Testis (tissue), 5 donors: ENCODE measurements at regions of chr2 and their contacts with region 1.

Region 1: DNA sequence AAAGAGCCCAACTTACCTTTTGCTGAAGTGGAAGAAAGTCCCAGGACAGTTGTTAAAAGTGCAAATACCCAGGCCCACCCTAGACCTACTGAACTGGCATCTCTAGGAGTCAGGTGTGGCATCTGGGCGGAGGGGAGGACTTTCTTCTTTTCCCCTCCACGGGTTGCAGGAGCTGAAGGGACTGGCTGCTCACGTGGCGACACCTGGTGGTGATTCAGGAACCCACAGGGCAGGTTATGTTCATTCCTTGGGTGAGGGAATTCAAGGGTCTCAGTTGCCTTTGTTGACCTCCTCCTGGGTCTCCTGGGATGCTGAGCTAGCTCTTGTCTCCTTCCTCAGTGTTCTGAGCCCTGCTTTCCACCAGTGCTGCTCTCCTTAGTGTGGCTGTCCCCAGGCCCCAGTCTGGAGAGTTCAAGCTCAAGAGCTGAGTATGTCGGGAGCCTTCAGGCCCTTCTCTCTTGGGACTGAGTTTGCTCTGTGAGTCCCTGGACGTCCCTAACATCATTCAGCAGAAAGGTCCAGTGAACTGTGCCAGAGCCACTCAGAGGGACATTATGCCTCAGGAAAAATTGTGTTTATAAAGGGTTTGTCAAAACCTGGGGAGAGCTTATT is 56.9 kb downstream of the DYSF start:
- DNase-seq: peak; percentile 82
- H3K4me3 ChIP-seq: no peak overlapping the region
- H3K27ac ChIP-seq: no peak overlapping the region
- H3K4me1 ChIP-seq: no peaks in the 10 kb centered on the region
- H3K27me3 ChIP-seq: no peaks in the 10 kb centered on the region
- CTCF ChIP-seq: peak; percentile 75 to 85 (median 83)
- POLR2A ChIP-seq: no peak

Region 2: DNA sequence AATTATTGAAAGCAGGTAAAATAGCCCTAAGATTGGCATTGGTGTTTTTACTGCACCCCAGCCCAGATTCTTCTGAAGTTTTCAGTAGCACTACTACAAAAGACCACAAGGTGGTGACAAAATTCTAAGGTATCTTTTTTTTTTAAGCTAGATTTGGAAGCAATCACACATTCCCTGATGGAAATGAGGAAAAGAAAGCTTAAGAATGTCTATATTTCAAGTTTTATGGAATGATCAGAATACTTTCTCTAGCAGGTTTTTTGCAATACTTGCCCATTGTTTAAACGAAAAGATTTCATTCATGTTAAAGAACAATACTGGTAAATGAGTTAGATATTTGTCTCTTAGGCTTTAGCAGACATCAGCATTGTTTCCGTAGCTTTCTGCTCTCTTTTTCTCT is 210.8 kb before region 1 on chr2:
- intact Hi-C with region 1: loop called (anchors 5 kb)
- DNase-seq: no peak
- H3K4me3 ChIP-seq: no peak overlapping the region
- H3K27ac ChIP-seq: no peak overlapping the region
- H3K4me1 ChIP-seq: no peaks in the 10 kb centered on the region
- H3K27me3 ChIP-seq: no peaks in the 10 kb centered on the region
- CTCF ChIP-seq: peak; percentile 44 to 73 (median 71)
- POLR2A ChIP-seq: no peak

Region 3: DNA sequence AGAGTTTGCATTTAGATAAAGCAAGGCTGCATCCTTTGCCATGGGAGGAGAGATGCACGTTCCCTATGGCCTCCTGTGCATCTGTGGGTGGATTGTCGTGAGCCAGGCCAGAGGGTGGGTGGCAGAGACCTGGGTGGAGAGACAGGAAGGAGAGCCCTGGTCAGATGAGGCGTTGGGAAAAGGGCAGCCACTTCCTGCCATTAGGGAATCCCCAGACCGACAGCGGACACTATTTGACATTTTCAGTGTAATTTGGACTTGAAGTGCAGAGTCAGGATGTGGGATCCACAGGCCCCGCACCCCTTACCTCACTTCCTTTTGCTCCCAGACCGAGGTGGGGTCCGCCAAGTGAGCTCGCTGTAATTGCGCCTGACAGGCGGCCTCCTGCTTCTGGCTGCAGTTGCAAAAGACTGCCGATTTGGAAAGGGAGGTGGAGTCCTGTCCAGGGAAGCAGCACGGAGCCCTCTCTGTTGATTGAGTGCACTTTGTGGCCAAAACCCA is 93.1 kb after region 1 on chr2:
- intact Hi-C with region 1: no loop called
- DNase-seq: no peak
- H3K4me3 ChIP-seq: no peak overlapping the region
- H3K27ac ChIP-seq: no peak overlapping the region
- H3K4me1 ChIP-seq: no peaks in the 10 kb centered on the region
- H3K27me3 ChIP-seq: no peaks in the 10 kb centered on the region
- CTCF ChIP-seq: no peak
- POLR2A ChIP-seq: no peak

Region 4: GRCh38 chr2:71736091-71736861 is 226.0 kb after region 1 on chr2:
- intact Hi-C with region 1: no loop called
- DNase-seq: no peak
- H3K4me3 ChIP-seq: no peak overlapping the region
- H3K27ac ChIP-seq: no peak overlapping the region
- H3K4me1 ChIP-seq: no peaks in the 10 kb centered on the region
- H3K27me3 ChIP-seq: no peaks in the 10 kb centered on the region
- CTCF ChIP-seq: no peak
- POLR2A ChIP-seq: no peak

Region 5: GRCh38 chr2:71772510-71773172 is 262.3 kb after region 1 on chr2:
- intact Hi-C with region 1: no loop called
- DNase-seq: no peak
- H3K4me3 ChIP-seq: no peak overlapping the region
- H3K27ac ChIP-seq: no peak overlapping the region
- H3K4me1 ChIP-seq: no peaks in the 10 kb centered on the region
- H3K27me3 ChIP-seq: no peaks in the 10 kb centered on the region
- CTCF ChIP-seq: no peak
- POLR2A ChIP-seq: no peak

Region 6: DNA sequence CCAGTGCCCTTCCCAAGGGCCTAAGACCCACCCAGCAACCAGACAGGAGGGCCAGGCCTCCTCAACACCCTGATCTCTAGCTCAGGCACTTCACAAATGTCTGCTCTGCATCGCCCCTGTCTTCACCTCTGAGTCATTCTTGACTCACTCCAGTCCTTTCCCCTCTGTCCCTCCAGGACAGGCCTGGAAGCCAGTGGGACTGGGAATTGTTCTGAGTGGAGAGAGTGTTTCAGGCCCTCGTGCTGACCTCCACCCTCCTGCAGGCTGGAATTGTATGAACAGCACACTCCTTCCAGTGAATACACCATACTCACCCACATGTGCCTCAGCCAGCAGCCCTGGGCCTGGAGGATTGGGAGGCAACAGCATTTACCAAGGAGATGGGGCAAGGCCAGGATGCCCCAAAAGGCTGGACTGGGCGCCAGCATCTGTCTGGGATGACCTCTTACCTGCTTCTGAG is 333.1 kb after region 1 on chr2:
- intact Hi-C with region 1: no loop called
- DNase-seq: no peak
- H3K4me3 ChIP-seq: no peak overlapping the region
- H3K27ac ChIP-seq: no peak overlapping the region
- H3K4me1 ChIP-seq: no peaks in the 10 kb centered on the region
- H3K27me3 ChIP-seq: no peaks in the 10 kb centered on the region
- CTCF ChIP-seq: no peak
- POLR2A ChIP-seq: no peak